Endothelial cell of umbilical vein (primary cell): ENCODE measurements at regions of chr6 and their contacts with region 1.

Region 1: GRCh38 chr6:129730477-129731165 is 20.6 kb upstream of the ARHGAP18 start:
- DNase-seq: peak; percentile 63
- H3K4me3 ChIP-seq: no peak overlapping the region
- H3K27ac ChIP-seq: no peak overlapping the region
- H3K4me1 ChIP-seq: peaks cover 7% of the 10 kb centered on the region
- H3K27me3 ChIP-seq: no peaks in the 10 kb centered on the region
- CTCF ChIP-seq: peak; percentile 29 to 40
- POLR2A ChIP-seq: no peak

Region 2: GRCh38 chr6:128919412-128920180 is 811.0 kb before region 1 on chr6:
- CTCF ChIA-PET with region 1: no interaction called
- POLR2A ChIA-PET with region 1: no interaction called
- dilution Hi-C with region 1: no loop called
- intact Hi-C with region 1: no loop called
- DNase-seq: no peak
- H3K4me3 ChIP-seq: no peak overlapping the region
- H3K27ac ChIP-seq: no peak overlapping the region
- H3K4me1 ChIP-seq: no peaks in the 10 kb centered on the region
- H3K27me3 ChIP-seq: peaks cover 0 to 1% of the 10 kb centered on the region in 2 experiments
- CTCF ChIP-seq: no peak
- POLR2A ChIP-seq: no peak

Region 3: GRCh38 chr6:129621247-129621646 is 109.4 kb before region 1 on chr6:
- CTCF ChIA-PET with region 1: interaction called, 3 read pairs
- POLR2A ChIA-PET with region 1: no interaction called
- dilution Hi-C with region 1: no loop called
- intact Hi-C with region 1: loop called (anchors 1 kb)
- DNase-seq: no peak
- H3K4me3 ChIP-seq: no peak overlapping the region
- H3K27ac ChIP-seq: no peak overlapping the region
- H3K4me1 ChIP-seq: peaks cover 27% of the 10 kb centered on the region
- H3K27me3 ChIP-seq: no peaks in the 10 kb centered on the region
- CTCF ChIP-seq: peak; percentile 27 to 28
- POLR2A ChIP-seq: no peak

Region 4: DNA sequence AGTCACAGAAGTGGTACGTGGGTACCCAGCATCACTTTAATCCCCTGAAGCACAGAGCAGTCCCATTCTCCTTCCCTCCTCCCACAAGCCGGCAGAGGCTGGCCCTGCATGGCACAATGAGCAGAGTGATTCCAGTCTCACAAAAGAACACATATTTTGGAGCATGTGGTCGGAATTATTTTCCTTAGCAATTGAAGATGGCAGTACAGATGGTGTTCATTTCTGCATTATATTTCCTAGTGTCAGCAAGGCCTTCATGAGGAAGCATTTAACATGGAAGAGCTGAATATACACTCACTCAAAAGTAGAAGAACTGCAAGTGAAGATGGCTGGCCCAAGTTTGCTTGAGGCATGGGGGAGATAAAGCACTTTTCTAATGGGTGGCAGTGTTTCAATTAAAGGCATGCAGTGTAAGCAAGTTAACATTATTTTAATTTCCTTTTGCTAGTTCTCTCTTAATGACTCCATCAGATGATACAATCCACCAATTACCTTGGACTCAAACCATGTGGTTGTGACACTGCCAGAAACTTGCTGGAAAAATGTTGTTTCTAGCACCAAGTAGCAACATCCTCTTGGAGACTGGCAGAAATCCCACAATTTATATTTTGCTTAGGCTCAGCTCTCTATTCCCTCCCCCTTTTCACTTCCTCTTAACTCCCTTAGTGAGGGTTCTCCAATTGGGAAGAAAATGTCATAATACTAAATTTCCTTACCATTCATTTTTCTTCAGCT is 95.1 kb before region 1 on chr6:
- CTCF ChIA-PET with region 1: interaction called, 4 read pairs
- POLR2A ChIA-PET with region 1: interaction called, 11 read pairs
- dilution Hi-C with region 1: no loop called
- intact Hi-C with region 1: no loop called
- DNase-seq: peak; percentile 84
- H3K4me3 ChIP-seq: no peak overlapping the region
- H3K27ac ChIP-seq: no peak overlapping the region
- H3K4me1 ChIP-seq: peaks cover 33% of the 10 kb centered on the region
- H3K27me3 ChIP-seq: no peaks in the 10 kb centered on the region
- CTCF ChIP-seq: no peak
- POLR2A ChIP-seq: no peak

Region 5: GRCh38 chr6:130178692-130179091 is 448.1 kb after region 1 on chr6:
- CTCF ChIA-PET with region 1: no interaction called
- POLR2A ChIA-PET with region 1: no interaction called
- dilution Hi-C with region 1: no loop called
- intact Hi-C with region 1: no loop called
- DNase-seq: no peak
- H3K4me3 ChIP-seq: no peak overlapping the region
- H3K27ac ChIP-seq: no peak overlapping the region
- H3K4me1 ChIP-seq: no peaks in the 10 kb centered on the region
- H3K27me3 ChIP-seq: peaks cover 0 to 2% of the 10 kb centered on the region in 2 experiments
- CTCF ChIP-seq: no peak
- POLR2A ChIP-seq: no peak